Heart right ventricle (tissue), 16 donors: ENCODE measurements at regions of chr1 and their contacts with region 1.

Region 1: DNA sequence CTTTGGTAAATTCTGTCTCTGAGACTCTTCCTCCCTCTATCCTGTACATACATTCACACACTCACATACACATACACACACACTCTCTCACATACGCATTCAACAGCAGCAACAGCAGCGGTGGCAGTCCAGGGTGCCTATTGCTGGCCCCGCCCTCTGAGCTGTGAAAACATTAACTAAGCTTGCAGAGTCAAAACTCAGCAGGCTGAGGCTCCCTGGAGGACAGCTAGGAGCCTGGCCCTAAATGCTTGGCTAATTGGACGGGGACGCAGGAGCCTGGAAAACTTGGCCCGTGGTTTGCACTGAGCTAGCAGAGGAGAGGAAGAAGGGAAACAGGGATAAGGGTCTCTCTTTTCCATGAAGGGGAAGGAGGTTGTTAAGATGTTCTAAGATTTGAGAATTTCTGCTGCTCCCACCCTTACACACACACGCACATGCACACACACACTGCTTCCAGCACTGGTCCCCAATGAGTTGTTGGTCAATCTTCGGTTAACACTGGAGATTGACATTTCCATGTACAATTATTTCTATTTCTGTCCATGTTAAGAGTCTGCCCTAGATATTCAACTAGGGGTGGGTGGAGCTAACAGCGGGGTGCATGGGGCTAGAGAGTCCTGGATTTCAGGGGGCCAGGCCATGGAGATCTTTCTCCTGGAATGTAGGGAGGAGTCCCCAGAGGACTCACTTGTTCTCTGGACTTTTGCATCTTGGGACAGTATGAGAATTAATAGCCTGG is 94.2 kb downstream of the PLXNA2 start:
- DNase-seq: peak; percentile 42 to 49
- ATAC-seq: peak; percentile 27 to 73 (median 51)
- H3K4me3 ChIP-seq: no peak overlapping the region
- H3K27ac ChIP-seq: peak overlapping the region in 4 of 10 donors; percentile 13 to 41 (median 28)
- H3K4me1 ChIP-seq: peaks cover 5 to 66% (median 35%) of the 10 kb centered on the region in 9 donors
- H3K27me3 ChIP-seq: no peaks in the 10 kb centered on the region
- CTCF ChIP-seq: no peak

Region 2: GRCh38 chr1:208184088-208184911 is 34.4 kb after region 1 on chr1:
- intact Hi-C with region 1: loop called in 1 of 10 experiments (anchors 5 kb)
- DNase-seq: no peak
- ATAC-seq: peak in 5 of 8 donors; percentile 53 to 93 (median 59)
- H3K4me3 ChIP-seq: no peak overlapping the region
- H3K27ac ChIP-seq: peak overlapping the region in 2 of 10 donors; percentile 4 to 40
- H3K4me1 ChIP-seq: peaks cover 18 to 77% (median 46%) of the 10 kb centered on the region in 9 donors
- H3K27me3 ChIP-seq: no peaks in the 10 kb centered on the region
- CTCF ChIP-seq: no peak